Activated CD4-positive, alpha-beta T cell treated with anti-CD3 and anti-CD28 coated beads, Interleukin-2, amount 10 ng/mL, durations not matched to agents 24 days and 14 days (primary cell): ENCODE measurements at regions of chrX and their contacts with region 1.

Region 1: GRCh38 chrX:120499301-120500072 is 30.4 kb upstream of the LAMP2 start:
- DNase-seq: no peak
- H3K4me3 Mint-ChIP-seq: no peak overlapping the region
- H3K27ac Mint-ChIP-seq: no peak overlapping the region
- H3K4me1 Mint-ChIP-seq: peaks cover 7% of the 10 kb centered on the region
- H3K27me3 Mint-ChIP-seq: no peaks in the 10 kb centered on the region

Region 2: GRCh38 chrX:120029354-120029753 is 470.1 kb before region 1 on chrX:
- intact Hi-C with region 1: no loop called
- DNase-seq: no peak
- H3K4me3 Mint-ChIP-seq: no peak overlapping the region
- H3K27ac Mint-ChIP-seq: no peak overlapping the region
- H3K4me1 Mint-ChIP-seq: no peaks in the 10 kb centered on the region
- H3K27me3 Mint-ChIP-seq: peaks cover 17% of the 10 kb centered on the region

Region 3: GRCh38 chrX:120560842-120561633 is 61.6 kb after region 1 on chrX and contains the start of gene CUL4B:
- intact Hi-C with region 1: loop called (anchors 1 kb)
- DNase-seq: peak; percentile 97
- H3K4me3 Mint-ChIP-seq: peak within 1 kb of the TSS; percentile 99
- H3K27ac Mint-ChIP-seq: peak within 1 kb of the TSS; percentile 99
- H3K4me1 Mint-ChIP-seq: peaks cover 21% of the 10 kb centered on the region
- H3K27me3 Mint-ChIP-seq: no peaks in the 10 kb centered on the region
- total RNA-seq, gene CUL4B: 30.4 and 30.5 TPM in 2 replicates

Region 4: DNA sequence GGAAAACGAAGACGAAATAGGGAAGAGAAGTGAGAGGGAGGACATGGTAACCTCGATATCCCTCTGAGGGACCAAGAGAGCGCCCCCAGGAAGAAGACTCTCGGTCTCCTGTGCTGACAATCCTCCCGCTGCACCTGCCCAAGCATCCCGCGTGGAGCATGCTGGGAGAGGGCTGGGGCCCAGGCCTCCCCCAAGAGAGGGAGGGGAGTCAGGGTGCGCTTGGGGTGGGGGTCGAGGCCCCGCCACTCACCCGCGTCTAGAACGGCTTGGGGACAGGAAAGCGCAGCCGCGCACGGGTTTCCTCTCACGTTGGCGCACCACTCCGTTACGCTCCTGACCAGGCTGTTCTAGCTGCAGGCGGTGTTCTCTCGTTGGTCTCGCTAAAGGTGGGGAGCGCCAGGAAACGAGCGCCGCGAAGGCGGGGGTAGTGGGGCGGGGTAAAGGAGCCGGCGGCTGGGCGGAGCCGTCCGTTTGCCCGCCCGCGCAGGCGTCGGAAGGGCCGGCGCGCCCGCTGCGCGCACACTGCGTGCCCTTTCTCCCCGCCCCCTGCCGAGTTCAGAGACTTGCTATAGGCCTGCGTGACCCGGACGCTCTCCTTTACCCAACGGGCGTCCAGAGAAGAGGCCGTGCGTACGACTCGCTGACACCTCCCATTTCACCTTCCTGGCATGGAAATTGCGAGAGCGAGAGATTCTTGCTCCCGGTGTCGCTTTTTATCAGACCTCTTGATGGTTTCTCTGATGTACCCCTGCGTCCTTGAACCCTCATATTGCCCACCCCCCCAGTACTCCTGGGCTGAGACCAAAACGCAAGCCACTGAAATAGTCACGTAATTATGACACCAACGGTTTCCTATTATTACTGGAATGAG is 130.4 kb after region 1 on chrX and contains the start of gene C1GALT1C1:
- intact Hi-C with region 1: loop called (anchors 2 kb)
- DNase-seq: peak; percentile 97
- H3K4me3 Mint-ChIP-seq: peak within 1 kb of the TSS; percentile 94
- H3K27ac Mint-ChIP-seq: peak within 1 kb of the TSS; percentile 97
- H3K4me1 Mint-ChIP-seq: peaks cover 15% of the 10 kb centered on the region
- H3K27me3 Mint-ChIP-seq: no peaks in the 10 kb centered on the region
- total RNA-seq, gene C1GALT1C1: 21.1 and 21.7 TPM in 2 replicates

Region 5: GRCh38 chrX:120753413-120754251 is 254.1 kb after region 1 on chrX:
- intact Hi-C with region 1: loop called (anchors 5 kb)
- DNase-seq: no peak
- H3K4me3 Mint-ChIP-seq: peak overlapping the region; percentile 47
- H3K27ac Mint-ChIP-seq: peak overlapping the region; percentile 71
- H3K4me1 Mint-ChIP-seq: peaks cover 33% of the 10 kb centered on the region
- H3K27me3 Mint-ChIP-seq: no peaks in the 10 kb centered on the region

Region 6: GRCh38 chrX:121579016-121579760 is 1079.7 kb after region 1 on chrX:
- intact Hi-C with region 1: loop called (anchors 10 kb)
- DNase-seq: peak; percentile 54
- H3K4me3 Mint-ChIP-seq: no peak overlapping the region
- H3K27ac Mint-ChIP-seq: no peak overlapping the region
- H3K4me1 Mint-ChIP-seq: no peaks in the 10 kb centered on the region
- H3K27me3 Mint-ChIP-seq: no peaks in the 10 kb centered on the region